Activated CD4-positive, alpha-beta memory T cell treated with anti-CD3 and anti-CD28 coated beads, Interleukin-2, amount 10 ng/mL, durations not matched to agents 7 days and 5 days (primary cell): ENCODE measurements at regions of chr7 and their contacts with region 1.

Region 1: DNA sequence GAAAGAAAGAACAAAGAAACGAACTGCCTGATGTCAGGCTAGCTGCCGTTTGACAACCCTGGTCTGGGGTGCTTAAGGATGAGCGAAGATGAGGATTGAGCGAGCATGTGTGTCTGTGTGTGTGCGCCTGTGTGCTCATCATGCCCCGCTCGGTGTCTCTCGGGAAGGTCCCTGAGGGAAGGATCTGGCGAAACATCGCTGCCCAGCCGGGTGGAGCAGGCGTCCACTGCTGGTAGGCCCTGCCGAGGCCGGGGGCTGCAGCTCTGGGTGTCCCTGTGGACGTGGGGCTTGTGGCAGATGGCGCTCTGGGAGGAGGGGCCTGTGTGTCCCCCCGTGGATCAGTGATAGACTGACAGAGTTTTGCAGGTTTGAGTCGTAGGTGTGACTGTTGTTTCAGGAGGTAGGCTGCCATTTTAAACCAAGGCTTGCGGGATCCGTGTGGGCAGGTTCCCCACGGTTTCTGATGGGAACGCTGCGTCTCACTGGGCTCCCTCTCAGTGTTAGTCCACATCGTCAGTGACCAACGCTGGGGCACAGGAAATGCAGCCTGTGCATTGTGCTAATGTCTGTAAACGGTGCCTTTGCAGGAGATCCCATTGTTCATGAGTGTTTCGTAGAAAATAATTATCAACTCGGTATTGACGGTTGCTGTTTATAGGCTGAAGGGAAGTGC is 5.9 kb upstream of the SUN1 start:
- DNase-seq: no peak
- H3K4me3 Mint-ChIP-seq: no peak overlapping the region
- H3K27ac Mint-ChIP-seq: no peak overlapping the region
- H3K4me1 Mint-ChIP-seq: peaks cover 36% of the 10 kb centered on the region
- H3K27me3 Mint-ChIP-seq: no peaks in the 10 kb centered on the region

Region 2: DNA sequence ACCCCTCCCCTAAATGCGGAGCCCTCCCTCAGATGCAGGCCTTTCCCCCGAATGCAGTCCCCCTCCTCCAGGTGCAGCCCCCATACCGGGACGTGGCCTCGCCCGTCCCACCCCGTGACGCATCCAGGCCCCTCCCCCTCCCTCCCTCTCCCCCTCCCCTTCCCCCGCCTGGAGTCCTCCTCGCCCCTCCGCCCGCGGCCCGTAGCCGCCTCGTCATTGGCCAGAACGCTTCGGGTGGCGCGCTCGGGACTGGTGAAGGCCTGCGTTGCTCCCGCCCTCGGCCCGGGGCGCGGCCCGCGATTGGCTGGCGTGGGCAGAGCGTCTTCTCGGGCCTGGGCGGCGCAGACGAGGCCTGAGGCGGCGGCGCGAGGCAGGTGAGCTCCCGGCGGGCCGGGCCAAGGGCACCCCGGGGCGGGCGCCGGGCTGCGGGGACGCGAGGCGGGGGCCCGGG is 10.1 kb before region 1 on chr7:
- CTCF ChIA-PET with region 1: interaction called, 16 read pairs
- POLR2A ChIA-PET with region 1: interaction called, 41 read pairs
- DNase-seq: peak; percentile 97
- H3K4me3 Mint-ChIP-seq: peak overlapping the region; percentile 71
- H3K27ac Mint-ChIP-seq: no peak overlapping the region
- H3K4me1 Mint-ChIP-seq: peaks cover 54% of the 10 kb centered on the region
- H3K27me3 Mint-ChIP-seq: peaks cover 26% of the 10 kb centered on the region